Caco-2 (cell line): ENCODE measurements at regions of chr21 and their contacts with region 1.

Region 1: GRCh38 chr21:20667931-20668330 is 330.3 kb upstream of the NCAM2 start:
- DNase-seq: no peak
- H3K4me3 ChIP-seq: no peak overlapping the region
- H3K4me3 Mint-ChIP-seq: no peak overlapping the region
- H3K27ac Mint-ChIP-seq: no peak overlapping the region
- H3K4me1 ChIP-seq: no peaks in the 10 kb centered on the region
- H3K4me1 Mint-ChIP-seq: no peaks in the 10 kb centered on the region
- H3K27me3 ChIP-seq: no peaks in the 10 kb centered on the region
- H3K27me3 Mint-ChIP-seq: no peaks in the 10 kb centered on the region
- CTCF ChIP-seq: no peak

Region 2: DNA sequence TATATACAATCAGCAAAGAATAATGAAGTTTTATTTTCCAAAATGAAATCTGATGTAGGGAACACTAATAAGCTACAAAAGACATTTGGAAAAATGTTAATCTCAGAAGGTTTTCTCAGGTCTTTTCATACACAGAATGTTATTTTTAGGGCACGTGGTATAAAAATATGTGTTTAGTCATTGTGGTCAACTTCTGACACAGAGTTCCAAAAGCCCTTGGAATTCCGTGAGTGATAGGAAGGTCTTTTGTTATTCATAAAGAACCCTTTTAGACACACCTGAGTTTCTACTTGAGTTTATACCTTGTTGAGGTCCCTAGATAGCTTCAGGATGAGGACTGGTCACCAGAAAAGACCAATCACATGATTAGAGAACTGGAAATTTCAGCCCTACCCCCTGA is 52.7 kb after region 1 on chr21:
- CTCF ChIA-PET with region 1: no interaction called
- POLR2A ChIA-PET with region 1: no interaction called
- intact Hi-C with region 1: no loop called
- DNase-seq: no peak
- H3K4me3 ChIP-seq: no peak overlapping the region
- H3K4me3 Mint-ChIP-seq: no peak overlapping the region
- H3K27ac Mint-ChIP-seq: no peak overlapping the region
- H3K4me1 ChIP-seq: no peaks in the 10 kb centered on the region
- H3K4me1 Mint-ChIP-seq: no peaks in the 10 kb centered on the region
- H3K27me3 ChIP-seq: no peaks in the 10 kb centered on the region
- H3K27me3 Mint-ChIP-seq: no peaks in the 10 kb centered on the region
- CTCF ChIP-seq: no peak

Region 3: GRCh38 chr21:20856926-20857325 is 189.0 kb after region 1 on chr21:
- CTCF ChIA-PET with region 1: no interaction called
- POLR2A ChIA-PET with region 1: no interaction called
- intact Hi-C with region 1: loop called (anchors 10 kb)
- DNase-seq: peak; percentile 47 to 50
- H3K4me3 ChIP-seq: no peak overlapping the region
- H3K4me3 Mint-ChIP-seq: no peak overlapping the region
- H3K27ac Mint-ChIP-seq: no peak overlapping the region
- H3K4me1 ChIP-seq: no peaks in the 10 kb centered on the region; the same call in 1 of the 2 replicates
- H3K4me1 Mint-ChIP-seq: peaks cover 6% of the 10 kb centered on the region
- H3K27me3 ChIP-seq: no peaks in the 10 kb centered on the region
- H3K27me3 Mint-ChIP-seq: no peaks in the 10 kb centered on the region
- CTCF ChIP-seq: no peak